Activated T-helper 2 cell treated with anti-CD3 and anti-CD28 coated beads, Interferon-gamma antibody, Interleukin-2, Interleukin-4, amounts not matched to agents 10 μg/mL and 5 μg/mL and 100 μg/mL, durations not matched to agents 14 hours and 24 hours and 36 hours (primary cell): ENCODE measurements at regions of chr3 and their contacts with region 1.

Region 1: DNA sequence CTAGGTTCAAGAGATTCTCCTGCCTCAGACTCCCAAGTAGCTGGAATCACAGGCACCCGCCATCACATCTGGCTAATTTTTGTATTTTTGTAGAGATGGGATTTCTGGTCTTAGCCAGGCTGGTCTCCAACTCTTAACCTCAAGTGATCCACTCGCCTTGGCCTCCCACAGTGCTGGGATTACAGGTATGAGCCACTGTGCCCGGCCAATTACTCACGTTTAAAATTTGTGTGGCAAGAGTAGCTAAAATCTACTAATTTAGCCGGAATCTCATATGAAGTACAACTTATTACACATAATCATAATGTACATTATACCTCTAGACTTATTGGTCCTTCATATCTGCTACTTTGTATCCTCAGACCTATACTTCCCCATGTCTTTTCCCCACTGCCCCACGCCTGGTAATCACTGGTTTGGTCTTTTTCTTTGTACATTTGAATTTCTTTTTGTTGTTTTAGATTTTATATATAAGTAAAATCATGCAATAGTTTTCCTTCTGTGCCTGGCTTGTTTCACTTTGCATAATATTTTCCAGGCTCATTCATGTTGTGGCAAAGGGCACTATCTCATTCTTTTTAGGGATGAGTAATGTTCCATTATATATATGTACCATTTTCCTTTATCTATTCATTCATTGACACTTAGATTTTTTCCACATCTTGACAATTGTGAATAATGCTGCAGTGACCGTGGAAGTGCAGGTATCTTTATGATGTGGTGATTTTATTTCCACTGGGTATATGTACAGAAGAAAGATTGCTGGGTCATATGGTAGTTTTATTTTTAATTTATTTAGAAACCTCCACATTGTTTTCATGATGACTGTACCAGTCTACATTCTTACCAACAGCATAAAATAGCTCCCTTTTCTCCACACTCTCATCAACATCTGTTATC is 605.0 kb upstream of the CBLB start:
- DNase-seq: no peak
- H3K4me3 Mint-ChIP-seq: no peak overlapping the region
- H3K27ac Mint-ChIP-seq: peak overlapping the region; percentile 84
- H3K4me1 Mint-ChIP-seq: peaks cover 7% of the 10 kb centered on the region
- H3K27me3 Mint-ChIP-seq: no peaks in the 10 kb centered on the region

Region 2: GRCh38 chr3:105876780-105877327 is 597.0 kb before region 1 on chr3:
- intact Hi-C with region 1: loop called (anchors 5 kb)
- DNase-seq: no peak
- H3K4me3 Mint-ChIP-seq: peak overlapping the region; percentile 34
- H3K27ac Mint-ChIP-seq: peak overlapping the region; percentile 75
- H3K4me1 Mint-ChIP-seq: peaks cover 32% of the 10 kb centered on the region
- H3K27me3 Mint-ChIP-seq: no peaks in the 10 kb centered on the region

Region 3: DNA sequence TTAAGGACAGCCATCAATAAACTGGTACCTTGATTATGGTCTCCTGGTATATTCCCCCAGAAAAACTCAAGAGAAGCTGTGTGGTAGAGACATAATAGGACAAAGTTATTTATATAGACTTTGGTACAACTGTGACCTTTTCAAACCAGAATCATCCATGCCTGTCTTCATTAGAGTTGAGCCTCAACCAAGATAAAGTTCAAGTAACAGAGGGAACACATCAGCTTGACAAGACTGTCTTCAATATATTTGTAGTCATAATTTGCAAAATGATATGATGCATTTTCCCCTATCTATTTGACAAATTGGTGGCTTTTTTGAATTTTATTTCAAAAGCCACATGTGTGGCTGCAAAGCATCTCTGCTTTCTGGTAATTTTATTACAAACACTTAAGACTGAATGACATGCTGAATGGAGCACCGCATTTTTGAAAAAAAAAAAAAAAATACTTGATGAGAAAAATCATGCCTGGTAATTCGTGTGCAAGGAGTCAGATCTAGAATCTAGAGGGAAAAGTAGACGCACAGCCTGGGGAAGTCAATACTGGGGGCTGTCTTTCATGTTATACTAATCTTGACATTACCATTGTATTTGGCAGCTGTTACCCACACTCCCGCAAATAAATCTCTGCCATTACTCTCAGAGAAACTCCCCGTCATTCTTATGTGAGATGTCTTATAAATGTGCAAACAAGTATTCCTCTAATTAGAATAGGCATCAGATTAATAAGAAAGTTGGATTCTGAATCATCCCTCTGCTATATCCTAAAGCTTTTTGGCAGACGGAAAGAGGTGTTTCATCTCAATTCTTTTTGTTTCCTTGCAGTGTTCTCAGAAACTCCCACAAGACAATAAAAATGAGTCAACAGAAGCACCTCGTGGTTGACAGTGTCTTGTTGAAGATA is 50.3 kb before region 1 on chr3:
- intact Hi-C with region 1: loop called (anchors 1 kb)
- DNase-seq: no peak
- H3K4me3 Mint-ChIP-seq: peak overlapping the region; percentile 20
- H3K27ac Mint-ChIP-seq: peak overlapping the region; percentile 78
- H3K4me1 Mint-ChIP-seq: peaks cover 47% of the 10 kb centered on the region
- H3K27me3 Mint-ChIP-seq: no peaks in the 10 kb centered on the region

Region 4: GRCh38 chr3:106518516-106518915 is 44.7 kb after region 1 on chr3:
- intact Hi-C with region 1: no loop called
- DNase-seq: no peak
- H3K4me3 Mint-ChIP-seq: no peak overlapping the region
- H3K27ac Mint-ChIP-seq: no peak overlapping the region
- H3K4me1 Mint-ChIP-seq: no peaks in the 10 kb centered on the region
- H3K27me3 Mint-ChIP-seq: no peaks in the 10 kb centered on the region

Region 5: DNA sequence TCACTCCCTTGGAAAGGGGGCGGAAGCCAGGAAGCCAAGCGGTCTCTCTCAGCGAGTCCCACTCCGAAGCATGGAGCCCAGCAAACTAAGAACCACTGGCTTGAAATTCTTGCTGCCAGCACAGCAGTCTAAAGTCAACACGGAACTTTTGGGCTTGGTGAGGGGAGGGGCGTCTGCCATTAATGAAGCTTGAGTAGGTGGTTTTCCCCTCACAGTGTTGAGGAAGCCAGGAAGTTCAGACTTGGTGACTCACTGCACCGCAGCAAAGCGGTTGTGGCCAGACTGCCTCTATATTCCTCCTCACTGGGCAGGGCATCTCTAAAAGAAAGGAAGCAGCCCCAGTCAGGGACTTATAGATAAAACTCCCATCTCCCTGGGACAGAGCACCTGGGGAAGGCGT is 60.4 kb after region 1 on chr3:
- intact Hi-C with region 1: loop called (anchors 5 kb)
- DNase-seq: peak; percentile 26
- H3K4me3 Mint-ChIP-seq: no peak overlapping the region
- H3K27ac Mint-ChIP-seq: peak overlapping the region; percentile 14
- H3K4me1 Mint-ChIP-seq: peaks cover 16% of the 10 kb centered on the region
- H3K27me3 Mint-ChIP-seq: no peaks in the 10 kb centered on the region

Region 6: DNA sequence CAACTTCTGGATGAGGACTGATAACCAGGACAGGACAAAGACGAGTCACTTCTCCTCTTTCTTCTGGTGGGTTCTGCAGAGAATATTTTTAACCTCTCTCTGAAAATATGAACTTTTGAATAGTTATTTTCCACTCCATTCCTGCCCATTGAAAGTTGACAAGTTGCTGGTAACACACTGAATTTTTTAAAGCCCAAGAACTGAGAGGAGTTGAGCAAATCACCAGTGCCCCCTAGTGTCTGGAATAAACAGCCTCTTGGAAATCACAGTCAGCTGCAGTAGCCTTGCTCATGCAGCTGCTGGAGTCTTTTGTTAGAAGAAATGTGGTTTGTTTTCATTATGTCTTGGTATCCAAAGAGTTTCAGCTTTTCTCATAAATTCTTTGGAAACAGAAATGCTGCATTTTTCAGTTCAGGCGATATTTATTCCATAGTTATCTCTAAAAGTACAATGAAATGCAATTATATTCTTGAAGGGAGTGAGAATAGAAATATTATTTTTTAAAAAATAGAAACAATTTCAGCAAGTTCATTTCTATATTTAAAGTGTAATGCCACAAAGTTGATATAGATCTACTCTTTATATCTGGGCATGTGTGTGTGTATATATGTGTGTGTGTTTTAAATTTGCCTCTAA is 136.0 kb after region 1 on chr3:
- intact Hi-C with region 1: loop called (anchors 1 kb)
- DNase-seq: peak; percentile 41
- H3K4me3 Mint-ChIP-seq: no peak overlapping the region
- H3K27ac Mint-ChIP-seq: peak overlapping the region; percentile 73
- H3K4me1 Mint-ChIP-seq: peaks cover 26% of the 10 kb centered on the region
- H3K27me3 Mint-ChIP-seq: no peaks in the 10 kb centered on the region